Spleen (tissue), 13 donors: ENCODE measurements at regions of chr11 and their contacts with region 1.

Region 1: DNA sequence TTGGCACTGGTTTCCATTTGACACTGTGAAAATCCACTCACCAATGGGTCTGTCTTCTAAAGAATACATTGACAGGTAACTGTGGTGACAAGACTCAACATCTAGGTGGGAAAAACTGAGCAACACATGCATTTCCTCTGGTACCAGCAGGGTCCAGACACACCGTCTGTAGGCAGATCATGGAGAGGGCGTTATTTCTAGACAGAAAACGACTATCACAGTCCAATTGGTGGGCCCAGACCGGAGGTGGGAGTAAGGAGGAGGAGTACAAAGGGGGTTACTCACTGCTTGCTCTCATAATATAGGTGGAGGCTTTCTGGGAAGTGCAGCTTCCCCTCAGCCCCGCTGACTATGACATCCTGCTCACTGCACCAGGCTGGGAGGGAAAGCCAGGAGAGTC is 9.9 kb downstream of the OVCH2 start:
- DNase-seq: no peak
- H3K4me3 ChIP-seq: no peak overlapping the region
- H3K27ac ChIP-seq: no peak overlapping the region
- H3K4me1 ChIP-seq: peaks cover 0 to 8% (median 0%) of the 10 kb centered on the region in 6 donors
- H3K27me3 ChIP-seq: peaks cover 0 to 42% (median 16%) of the 10 kb centered on the region in 7 donors
- CTCF ChIP-seq: no peak
- POLR2A ChIP-seq: no peak

Region 2: GRCh38 chr11:7089328-7090251 is 606.8 kb before region 1 on chr11:
- intact Hi-C with region 1: loop called (anchors 5 kb)
- DNase-seq: no peak
- H3K4me3 ChIP-seq: no peak overlapping the region
- H3K27ac ChIP-seq: no peak overlapping the region
- H3K4me1 ChIP-seq: no peaks in the 10 kb centered on the region
- H3K27me3 ChIP-seq: peaks cover 0 to 14% (median 0%) of the 10 kb centered on the region in 7 donors
- CTCF ChIP-seq: no peak
- POLR2A ChIP-seq: no peak